Heart left ventricle (tissue), 16 donors: ENCODE measurements at regions of chr21 and their contacts with region 1.

Region 1: GRCh38 chr21:38869946-38870345 is 64.2 kb downstream of the ETS2 start:
- DNase-seq: no peak
- ATAC-seq: no peak
- H3K4me3 ChIP-seq: no peak overlapping the region
- H3K27ac ChIP-seq: no peak overlapping the region
- H3K4me1 ChIP-seq: peaks cover 0 to 9% (median 0%) of the 10 kb centered on the region in 12 donors
- H3K27me3 ChIP-seq: no peaks in the 10 kb centered on the region
- CTCF ChIP-seq: no peak
- POLR2A ChIP-seq: no peak

Region 2: DNA sequence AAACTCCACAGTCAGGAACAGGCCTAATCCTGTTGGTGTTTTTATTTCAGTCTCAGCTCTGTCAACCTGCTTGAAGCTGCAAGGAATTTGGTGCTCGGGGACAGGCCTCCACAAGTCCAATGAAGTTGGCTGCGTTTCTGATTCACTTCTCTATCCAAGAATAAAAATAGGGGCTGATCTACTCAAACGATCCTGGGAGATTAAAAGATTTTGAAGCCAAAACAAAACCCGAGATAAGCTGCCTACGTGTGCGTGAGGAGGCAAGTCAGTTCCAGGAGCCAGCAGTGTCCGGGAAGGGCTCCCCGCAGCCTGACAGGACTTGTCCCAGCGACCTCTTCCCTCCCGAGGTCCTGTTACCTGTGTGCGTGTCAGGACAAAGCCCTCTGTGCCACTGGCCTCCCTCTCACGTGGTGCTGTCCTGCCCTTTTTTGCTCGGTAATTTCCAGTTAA is 33.8 kb after region 1 on chr21:
- intact Hi-C with region 1: loop called in 1 of 10 experiments (anchors 5 kb)
- DNase-seq: peak in 1 of 5 donors; percentile 87
- ATAC-seq: peak in 2 of 4 donors; percentile 36 to 53
- H3K4me3 ChIP-seq: no peak overlapping the region
- H3K27ac ChIP-seq: peak overlapping the region in 11 of 12 donors; percentile 35 to 79 (median 68)
- H3K4me1 ChIP-seq: peaks cover 0 to 38% (median 23%) of the 10 kb centered on the region in 12 donors
- H3K27me3 ChIP-seq: no peaks in the 10 kb centered on the region
- CTCF ChIP-seq: no peak
- POLR2A ChIP-seq: no peak

Region 3: GRCh38 chr21:38925923-38926322 is 56.0 kb after region 1 on chr21:
- intact Hi-C with region 1: no loop called
- DNase-seq: peak; percentile 72 to 84 (median 74)
- ATAC-seq: peak; percentile 83 to 95 (median 92)
- H3K4me3 ChIP-seq: peak overlapping the region in 10 of 12 donors; percentile 26 to 43 (median 36)
- H3K27ac ChIP-seq: peak overlapping the region; percentile 51 to 89 (median 72)
- H3K4me1 ChIP-seq: peaks cover 0 to 39% (median 16%) of the 10 kb centered on the region in 12 donors
- H3K27me3 ChIP-seq: no peaks in the 10 kb centered on the region
- CTCF ChIP-seq: no peak
- POLR2A ChIP-seq: no peak